ENCODE measurements at regions of chr5 and their contacts with region 1.

Region 1: DNA sequence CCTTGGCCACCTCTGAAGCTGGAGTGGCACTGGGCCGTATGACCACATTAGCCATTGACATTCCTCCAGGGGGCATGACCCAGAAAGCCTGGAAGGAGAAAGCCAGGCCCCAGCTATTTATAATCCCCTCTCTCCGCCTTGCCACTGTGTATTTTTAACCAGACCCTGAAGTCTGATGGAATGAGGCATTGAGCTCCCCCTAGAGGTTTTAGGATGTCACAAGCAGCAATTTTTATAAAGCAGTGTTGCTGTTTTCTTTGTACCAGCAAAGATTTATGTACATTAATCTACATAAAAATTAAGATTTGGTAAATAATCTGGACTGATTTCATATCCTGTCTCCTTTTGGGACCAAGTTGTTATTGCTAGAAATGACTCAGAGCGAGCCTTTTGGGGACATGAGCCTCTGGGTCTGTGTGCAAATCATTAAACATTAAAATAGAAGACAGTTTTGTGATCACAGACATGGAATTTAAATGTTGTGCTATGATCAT is 127.1 kb downstream of the TRIO start:
- DNase-seq: peak; percentile 75
- H3K4me3 ChIP-seq: no peak overlapping the region
- H3K27ac ChIP-seq: peak overlapping the region; percentile 76
- H3K4me1 ChIP-seq: peaks cover 52% of the 10 kb centered on the region
- H3K27me3 ChIP-seq: no peaks in the 10 kb centered on the region
- CTCF ChIP-seq: peak; percentile 73 to 74
- POLR2A ChIP-seq: no peak

Region 2: GRCh38 chr5:13910637-13911288 is 359.5 kb before region 1 on chr5:
- CTCF ChIA-PET with region 1: no interaction called
- POLR2A ChIA-PET with region 1: no interaction called
- dilution Hi-C with region 1: no loop called
- intact Hi-C with region 1: no loop called
- DNase-seq: no peak
- H3K4me3 ChIP-seq: no peak overlapping the region
- H3K27ac ChIP-seq: no peak overlapping the region
- H3K4me1 ChIP-seq: no peaks in the 10 kb centered on the region
- H3K27me3 ChIP-seq: no peaks in the 10 kb centered on the region
- CTCF ChIP-seq: no peak
- POLR2A ChIP-seq: no peak

Region 3: DNA sequence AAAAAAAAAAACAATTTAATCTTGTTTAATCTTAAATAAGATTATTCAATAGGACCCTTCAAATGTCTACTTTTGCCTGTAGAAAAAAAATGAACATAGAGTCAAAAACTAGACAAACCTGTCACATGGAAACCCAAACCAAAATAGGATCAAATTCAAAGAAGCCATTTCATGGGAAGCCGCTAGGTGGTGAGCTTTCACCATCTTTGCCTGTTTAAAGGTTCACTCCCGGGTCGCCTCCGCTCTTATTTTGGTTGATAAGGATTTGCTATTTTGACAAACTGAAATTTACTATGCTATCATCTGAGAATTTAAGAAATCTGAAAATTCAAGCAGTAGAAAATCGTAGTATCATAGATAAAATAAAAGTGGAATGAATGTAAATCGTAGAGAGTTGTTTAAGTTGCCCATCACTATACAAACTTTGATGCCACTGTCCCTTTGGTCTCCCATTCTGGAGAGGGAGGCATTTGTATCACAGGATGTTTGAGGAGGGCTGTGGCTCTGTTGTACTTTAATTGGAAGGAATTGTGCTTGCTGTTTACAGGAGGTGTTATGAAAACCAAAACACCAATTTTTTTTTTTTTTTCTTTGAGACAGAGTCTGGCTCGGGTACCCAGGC is 282.3 kb before region 1 on chr5:
- CTCF ChIA-PET with region 1: interaction called, 14 read pairs
- POLR2A ChIA-PET with region 1: no interaction called
- dilution Hi-C with region 1: loop called (anchors 25 kb)
- intact Hi-C with region 1: loop called (anchors 1 kb)
- DNase-seq: peak; percentile 64
- H3K4me3 ChIP-seq: no peak overlapping the region
- H3K27ac ChIP-seq: no peak overlapping the region
- H3K4me1 ChIP-seq: peaks cover 16% of the 10 kb centered on the region
- H3K27me3 ChIP-seq: no peaks in the 10 kb centered on the region
- CTCF ChIP-seq: peak; percentile 69 to 84
- POLR2A ChIP-seq: no peak

Region 4: GRCh38 chr5:14142827-14143548 is 127.3 kb before region 1 on chr5 and contains the start of gene TRIO:
- CTCF ChIA-PET with region 1: interaction called, 38 read pairs
- POLR2A ChIA-PET with region 1: interaction called, 3 read pairs
- dilution Hi-C with region 1: loop called (anchors 25 kb)
- intact Hi-C with region 1: loop called (anchors 1 kb)
- DNase-seq: peak; percentile 94
- H3K4me3 ChIP-seq: peak within 1 kb of the TSS; percentile 55 to 98 (median 91)
- H3K27ac ChIP-seq: peak within 1 kb of the TSS; percentile 94
- H3K4me1 ChIP-seq: peaks cover 33% of the 10 kb centered on the region
- H3K27me3 ChIP-seq: peaks cover 9 to 10% of the 10 kb centered on the region in 2 experiments
- CTCF ChIP-seq: peak; percentile 36 to 72
- POLR2A ChIP-seq: peak; percentile 85
- total RNA-seq, gene TRIO: 242 and 248 TPM in 2 replicates

Region 5: GRCh38 chr5:14174230-14174637 is 96.0 kb before region 1 on chr5:
- CTCF ChIA-PET with region 1: interaction called, 10 read pairs
- POLR2A ChIA-PET with region 1: no interaction called
- dilution Hi-C with region 1: no loop called
- intact Hi-C with region 1: no loop called
- DNase-seq: peak; percentile 57
- H3K4me3 ChIP-seq: no peak overlapping the region
- H3K27ac ChIP-seq: peak overlapping the region; percentile 29
- H3K4me1 ChIP-seq: peaks cover 46% of the 10 kb centered on the region
- H3K27me3 ChIP-seq: no peaks in the 10 kb centered on the region
- CTCF ChIP-seq: no peak
- POLR2A ChIP-seq: no peak

Region 6: GRCh38 chr5:14240359-14240758 is 29.9 kb before region 1 on chr5:
- CTCF ChIA-PET with region 1: interaction called, 10 read pairs
- POLR2A ChIA-PET with region 1: no interaction called
- dilution Hi-C with region 1: no loop called
- intact Hi-C with region 1: no loop called
- DNase-seq: no peak
- H3K4me3 ChIP-seq: no peak overlapping the region
- H3K27ac ChIP-seq: no peak overlapping the region
- H3K4me1 ChIP-seq: peaks cover 22% of the 10 kb centered on the region
- H3K27me3 ChIP-seq: no peaks in the 10 kb centered on the region
- CTCF ChIP-seq: no peak
- POLR2A ChIP-seq: no peak

Region 7: GRCh38 chr5:14280294-14280854 is 10.1 kb after region 1 on chr5:
- CTCF ChIA-PET with region 1: interaction called, 12 read pairs
- POLR2A ChIA-PET with region 1: no interaction called
- dilution Hi-C with region 1: no loop called
- intact Hi-C with region 1: no loop called
- DNase-seq: no peak
- H3K4me3 ChIP-seq: no peak overlapping the region
- H3K27ac ChIP-seq: no peak overlapping the region
- H3K4me1 ChIP-seq: peaks cover 18% of the 10 kb centered on the region
- H3K27me3 ChIP-seq: no peaks in the 10 kb centered on the region
- CTCF ChIP-seq: no peak
- POLR2A ChIP-seq: no peak

Region 8: GRCh38 chr5:14379739-14380497 is 109.7 kb after region 1 on chr5:
- CTCF ChIA-PET with region 1: no interaction called
- POLR2A ChIA-PET with region 1: no interaction called
- dilution Hi-C with region 1: no loop called
- intact Hi-C with region 1: no loop called
- DNase-seq: no peak
- H3K4me3 ChIP-seq: no peak overlapping the region
- H3K27ac ChIP-seq: no peak overlapping the region
- H3K4me1 ChIP-seq: no peaks in the 10 kb centered on the region
- H3K27me3 ChIP-seq: no peaks in the 10 kb centered on the region
- CTCF ChIP-seq: no peak
- POLR2A ChIP-seq: no peak

Region 9: DNA sequence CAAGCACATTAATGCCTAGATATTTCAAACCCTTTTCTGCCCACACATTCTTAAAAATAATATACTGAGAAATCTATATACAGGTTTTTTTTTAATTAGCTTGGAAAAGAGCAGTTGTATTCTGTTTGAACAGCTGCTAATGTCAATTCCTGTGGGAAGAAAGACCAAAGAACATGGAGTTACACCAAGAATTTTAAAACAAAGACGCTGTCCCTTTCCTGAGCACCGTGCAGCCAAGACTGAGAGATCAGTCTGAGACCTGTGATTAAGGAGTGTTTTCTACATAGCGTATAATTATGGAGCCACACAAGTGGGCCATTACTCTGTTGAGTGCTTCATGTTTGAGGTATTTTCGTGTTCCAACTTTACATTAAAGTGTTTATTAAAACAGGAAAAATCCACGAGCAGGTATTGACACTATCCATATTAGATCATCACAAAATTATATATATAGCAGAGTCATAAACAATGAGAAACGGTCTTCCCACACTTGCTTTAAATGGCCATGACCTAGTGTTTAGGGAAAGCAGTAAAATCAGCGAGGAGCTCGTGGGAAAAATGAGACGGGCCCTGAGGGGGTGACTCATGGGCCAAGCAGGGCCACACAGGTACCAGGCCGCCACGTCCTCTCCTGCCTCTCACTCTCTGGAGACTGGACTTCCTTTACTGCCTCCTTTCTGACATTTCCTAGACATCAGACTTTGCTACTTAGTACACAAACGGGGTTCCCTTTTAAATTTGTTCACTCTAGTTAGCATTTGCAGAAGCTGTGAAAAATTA is 158.2 kb after region 1 on chr5:
- CTCF ChIA-PET with region 1: no interaction called
- POLR2A ChIA-PET with region 1: no interaction called
- dilution Hi-C with region 1: no loop called
- intact Hi-C with region 1: no loop called
- DNase-seq: peak; percentile 78
- H3K4me3 ChIP-seq: no peak overlapping the region
- H3K27ac ChIP-seq: peak overlapping the region; percentile 56
- H3K4me1 ChIP-seq: peaks cover 10% of the 10 kb centered on the region
- H3K27me3 ChIP-seq: no peaks in the 10 kb centered on the region
- CTCF ChIP-seq: no peak
- POLR2A ChIP-seq: no peak